ENCODE measurements at regions of chr17 and their contacts with region 1.

Region 1: GRCh38 chr17:75271233-75271954 is 363 bp upstream of the MIF4GD start:
- DNase-seq: peak; percentile 91
- H3K4me3 Mint-ChIP-seq: peak overlapping the region; percentile 75
- H3K27ac Mint-ChIP-seq: peak overlapping the region; percentile 63
- H3K4me1 Mint-ChIP-seq: peaks cover 31% of the 10 kb centered on the region
- H3K27me3 Mint-ChIP-seq: no peaks in the 10 kb centered on the region

Region 2: GRCh38 chr17:75205037-75205792 is 66.2 kb before region 1 on chr17 and contains the start of gene NUP85:
- CTCF ChIA-PET with region 1: interaction called, 11 read pairs
- POLR2A ChIA-PET with region 1: interaction called, 5 read pairs
- intact Hi-C with region 1: no loop called
- DNase-seq: peak; percentile 95
- H3K4me3 Mint-ChIP-seq: peak within 1 kb of the TSS; percentile 81
- H3K27ac Mint-ChIP-seq: peak within 1 kb of the TSS; percentile 89
- H3K4me1 Mint-ChIP-seq: peaks cover 18% of the 10 kb centered on the region
- H3K27me3 Mint-ChIP-seq: no peaks in the 10 kb centered on the region
- total RNA-seq, gene NUP85: 125 to 132 TPM

Region 3: DNA sequence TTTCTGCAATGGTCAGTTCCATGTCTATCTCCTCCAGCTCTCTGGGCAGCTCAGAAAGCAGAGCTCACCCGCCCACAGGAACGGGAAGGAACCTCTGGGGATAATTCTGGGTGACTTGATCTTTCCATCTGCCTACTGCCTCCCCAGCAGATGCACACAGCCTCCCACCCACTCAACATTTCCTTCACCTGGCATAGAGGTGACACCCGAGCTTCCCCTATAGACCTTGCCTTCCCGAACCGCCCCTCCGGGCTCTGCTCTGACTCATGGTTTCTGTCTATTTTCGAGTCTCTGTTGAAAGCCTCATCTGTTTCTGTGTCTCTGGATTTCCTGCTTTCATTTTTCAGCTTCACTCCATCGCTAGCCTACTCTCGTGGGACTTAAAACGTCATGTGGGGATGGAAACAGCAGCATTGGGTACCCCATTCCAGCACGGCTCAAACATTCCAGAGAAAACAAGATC is 21.4 kb before region 1 on chr17:
- CTCF ChIA-PET with region 1: interaction called, 12 read pairs
- POLR2A ChIA-PET with region 1: interaction called, 5 read pairs
- intact Hi-C with region 1: loop called (anchors 2 kb)
- DNase-seq: peak; percentile 91
- H3K4me3 Mint-ChIP-seq: peak overlapping the region; percentile 58
- H3K27ac Mint-ChIP-seq: peak overlapping the region; percentile 90
- H3K4me1 Mint-ChIP-seq: peaks cover 64% of the 10 kb centered on the region
- H3K27me3 Mint-ChIP-seq: no peaks in the 10 kb centered on the region

Region 4: GRCh38 chr17:75405365-75406221 is 134.2 kb after region 1 on chr17 and contains the start of gene GRB2:
- CTCF ChIA-PET with region 1: interaction called, 12 read pairs
- POLR2A ChIA-PET with region 1: interaction called, 8 read pairs
- intact Hi-C with region 1: no loop called
- DNase-seq: peak; percentile 100
- H3K4me3 Mint-ChIP-seq: peak within 1 kb of the TSS; percentile 89
- H3K27ac Mint-ChIP-seq: peak within 1 kb of the TSS; percentile 95
- H3K4me1 Mint-ChIP-seq: peaks cover 31% of the 10 kb centered on the region
- H3K27me3 Mint-ChIP-seq: no peaks in the 10 kb centered on the region
- total RNA-seq, gene GRB2: 174 to 182 TPM

Region 5: DNA sequence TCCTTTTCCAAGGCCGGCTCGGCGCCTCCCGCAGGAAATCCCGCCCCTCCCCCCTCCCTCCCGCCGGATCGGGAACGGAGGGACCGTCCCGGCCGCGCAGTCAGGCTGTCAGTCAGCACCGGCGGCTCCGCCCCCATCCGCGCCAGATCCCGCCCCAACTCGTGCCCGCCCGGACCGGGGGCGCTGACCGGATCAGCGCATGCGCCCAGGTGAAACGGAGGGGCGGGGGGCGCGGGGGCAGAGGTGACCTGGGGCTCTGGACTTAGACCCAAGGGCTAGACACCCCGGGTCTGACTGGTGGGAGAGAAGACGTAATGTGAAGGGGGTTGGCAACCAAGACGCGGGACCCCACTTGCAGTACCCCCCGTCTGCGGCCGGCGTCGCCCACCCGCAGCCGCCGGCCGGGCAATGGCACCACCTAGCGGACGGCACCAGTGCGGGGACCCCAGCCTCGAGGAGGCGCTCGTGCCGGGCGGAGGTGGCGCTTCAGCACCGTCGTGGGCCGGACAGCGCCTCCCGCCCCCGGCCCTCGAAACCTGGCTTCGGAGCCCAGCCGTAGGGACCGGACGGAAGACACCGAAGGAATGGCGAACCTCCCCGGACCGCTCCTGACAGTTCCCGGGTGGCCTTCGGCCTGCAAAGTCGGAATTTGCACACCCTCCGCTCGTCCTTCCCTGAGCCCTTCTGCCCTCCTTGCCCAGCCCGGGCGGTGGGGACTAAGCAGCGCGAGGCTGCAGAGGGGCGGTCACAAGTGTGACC is 244.3 kb after region 1 on chr17 and contains the start of gene CASKIN2:
- CTCF ChIA-PET with region 1: interaction called, 4 read pairs
- POLR2A ChIA-PET with region 1: interaction called, 4 read pairs
- intact Hi-C with region 1: loop called (anchors 5 kb)
- DNase-seq: peak; percentile 91
- H3K4me3 Mint-ChIP-seq: peak within 1 kb of the TSS; percentile 57
- H3K27ac Mint-ChIP-seq: no peak within 1 kb of the TSS
- H3K4me1 Mint-ChIP-seq: peaks cover 17% of the 10 kb centered on the region
- H3K27me3 Mint-ChIP-seq: peaks cover 4% of the 10 kb centered on the region
- total RNA-seq, gene CASKIN2: 4.7 to 5.3 TPM